MCF 10A (cell line): ENCODE measurements at regions of chr15 and their contacts with region 1.

Region 1: DNA sequence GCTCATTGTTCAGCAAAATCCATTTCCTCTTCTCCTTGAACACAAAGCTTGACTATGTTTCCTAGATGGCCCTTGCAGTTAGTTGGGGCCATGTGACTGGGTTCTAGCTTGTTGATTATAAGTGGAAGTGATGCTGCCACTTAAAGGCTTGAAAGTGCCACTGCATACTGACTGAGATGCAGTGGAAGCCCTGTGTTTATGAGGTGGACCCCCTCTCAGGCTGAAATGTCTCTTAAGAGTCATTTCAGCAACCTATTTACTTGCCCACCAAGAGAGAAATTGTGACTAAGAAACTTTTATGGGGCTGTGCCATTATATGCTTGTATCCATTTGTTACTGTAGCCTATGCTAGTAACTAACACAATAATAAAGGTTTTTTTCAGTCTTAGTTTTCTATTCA is 8.4 kb upstream of the ANP32A start:
- DNase-seq: peak; percentile 40
- H3K4me3 Mint-ChIP-seq: no peak overlapping the region
- H3K27ac Mint-ChIP-seq: no peak overlapping the region
- H3K4me1 Mint-ChIP-seq: no peaks in the 10 kb centered on the region
- H3K27me3 Mint-ChIP-seq: no peaks in the 10 kb centered on the region
- CTCF ChIP-seq: peak; percentile 28

Region 2: GRCh38 chr15:68730471-68730919 is 98.6 kb before region 1 on chr15:
- CTCF ChIA-PET with region 1: no interaction called
- POLR2A ChIA-PET with region 1: no interaction called
- intact Hi-C with region 1: loop called (anchors 1 kb)
- DNase-seq: peak; percentile 53
- H3K4me3 Mint-ChIP-seq: no peak overlapping the region
- H3K27ac Mint-ChIP-seq: no peak overlapping the region
- H3K4me1 Mint-ChIP-seq: no peaks in the 10 kb centered on the region
- H3K27me3 Mint-ChIP-seq: no peaks in the 10 kb centered on the region
- CTCF ChIP-seq: peak; percentile 61

Region 3: DNA sequence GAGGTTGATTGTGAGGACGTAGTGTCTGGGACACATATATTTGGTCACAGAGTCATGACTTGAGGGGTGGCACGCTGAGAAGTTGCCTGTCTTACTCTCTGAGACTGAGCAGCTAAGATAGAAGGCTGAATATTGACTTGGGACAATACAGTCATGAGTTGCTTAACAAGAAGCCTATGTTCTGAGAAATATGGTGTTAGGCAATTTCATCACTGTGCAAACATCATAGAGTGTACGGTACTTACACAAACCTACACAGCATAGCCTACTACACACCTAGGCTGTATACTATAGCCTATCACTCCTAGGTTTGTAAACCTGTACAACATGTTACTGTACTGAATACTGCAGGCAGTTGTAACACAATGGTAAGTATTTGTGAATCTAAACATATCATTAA is 71.0 kb after region 1 on chr15:
- CTCF ChIA-PET with region 1: no interaction called
- POLR2A ChIA-PET with region 1: no interaction called
- intact Hi-C with region 1: no loop called
- DNase-seq: peak; percentile 17
- H3K4me3 Mint-ChIP-seq: no peak overlapping the region
- H3K27ac Mint-ChIP-seq: no peak overlapping the region
- H3K4me1 Mint-ChIP-seq: no peaks in the 10 kb centered on the region
- H3K27me3 Mint-ChIP-seq: peaks cover 12% of the 10 kb centered on the region
- CTCF ChIP-seq: no peak